Dendritic cell treated with granulocyte-macrophage colony-stimulating factor and Interleukin-4, amounts not matched to agents 40 ng/mL and 50 ng/mL, for 4 days (primary cell): ENCODE measurements at regions of chr7 and their contacts with region 1.

Region 1: GRCh38 chr7:101165075-101165957 is at the start of gene VGF:
- H3K4me3 Mint-ChIP-seq: peak within 1 kb of the TSS; percentile 74
- H3K27ac Mint-ChIP-seq: peak within 1 kb of the TSS; percentile 7
- H3K4me1 Mint-ChIP-seq: peaks cover 52% of the 10 kb centered on the region
- H3K27me3 Mint-ChIP-seq: peaks cover 91% of the 10 kb centered on the region

Region 2: DNA sequence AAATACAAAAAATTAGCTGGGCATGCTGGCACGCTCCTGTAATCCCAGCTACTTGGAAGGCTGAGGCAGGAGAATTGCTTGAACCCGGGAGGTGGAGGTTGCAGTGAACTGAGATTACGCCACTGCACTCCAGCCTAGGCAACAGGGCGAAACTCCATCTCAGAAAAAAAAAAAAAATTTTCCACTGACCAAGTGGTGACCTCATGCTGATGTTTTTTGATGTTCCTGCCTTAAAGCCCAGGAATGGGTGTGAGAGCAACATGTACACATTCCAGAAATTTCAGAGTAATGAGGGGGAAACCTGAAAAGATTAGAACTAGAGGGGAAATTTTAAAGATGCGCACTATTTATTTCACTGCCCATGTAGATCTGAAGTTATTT is 662.0 kb before region 1 on chr7:
- intact Hi-C with region 1: no loop called
- H3K4me3 Mint-ChIP-seq: no peak overlapping the region
- H3K27ac Mint-ChIP-seq: no peak overlapping the region
- H3K4me1 Mint-ChIP-seq: peaks cover 3% of the 10 kb centered on the region
- H3K27me3 Mint-ChIP-seq: peaks cover 30% of the 10 kb centered on the region

Region 3: GRCh38 chr7:101153969-101154692 is 11.2 kb before region 1 on chr7 and contains the start of gene AP1S1:
- intact Hi-C with region 1: loop called (anchors 1 kb)
- H3K4me3 Mint-ChIP-seq: peak within 1 kb of the TSS; percentile 78
- H3K27ac Mint-ChIP-seq: peak within 1 kb of the TSS; percentile 50
- H3K4me1 Mint-ChIP-seq: peaks cover 30% of the 10 kb centered on the region
- H3K27me3 Mint-ChIP-seq: peaks cover 24% of the 10 kb centered on the region